ENCODE measurements at regions of chr19 and their contacts with region 1.

Region 1: DNA sequence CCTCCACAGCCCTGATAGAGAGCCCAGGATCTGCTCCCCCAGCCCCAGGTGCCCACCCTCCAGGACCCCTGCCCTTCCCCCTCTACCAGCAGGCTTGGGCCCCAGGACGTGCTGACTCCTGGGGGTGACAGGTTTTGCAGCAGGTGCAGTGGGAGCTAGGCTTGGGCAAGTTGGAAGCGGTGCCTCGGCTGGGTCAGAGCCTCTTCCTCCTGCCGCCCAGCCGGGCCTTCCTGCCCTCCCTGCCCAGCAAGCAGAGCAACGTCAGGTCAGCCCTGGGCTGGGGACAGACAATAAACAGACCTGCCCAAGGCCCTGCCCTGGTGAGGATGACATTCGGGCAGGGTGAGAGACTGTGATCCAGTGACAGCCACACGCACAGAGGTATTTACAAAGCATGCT is 9.2 kb upstream of the NCCRP1 start:
- DNase-seq: no peak

Region 2: DNA sequence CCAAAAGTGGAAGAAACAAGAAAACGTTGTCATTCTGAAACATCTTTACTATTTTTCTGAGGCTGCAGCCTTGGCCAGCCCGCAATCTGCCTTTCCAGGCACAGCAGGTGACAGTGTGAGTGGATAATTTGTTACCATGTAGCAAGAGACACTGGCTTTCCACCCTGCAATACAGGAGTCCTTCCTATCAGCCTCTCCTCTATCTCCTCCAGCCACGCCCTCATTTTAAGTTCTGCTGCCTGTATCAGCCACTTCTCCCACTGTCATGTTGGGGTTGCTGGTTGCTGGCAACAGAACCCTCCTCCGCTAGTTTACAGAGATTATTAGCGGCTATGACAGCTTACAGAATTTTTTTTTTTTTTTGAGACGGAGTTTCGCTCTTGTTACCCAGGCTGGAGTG is 406.5 kb before region 1 on chr19:
- intact Hi-C with region 1: no loop called
- DNase-seq: no peak

Region 3: DNA sequence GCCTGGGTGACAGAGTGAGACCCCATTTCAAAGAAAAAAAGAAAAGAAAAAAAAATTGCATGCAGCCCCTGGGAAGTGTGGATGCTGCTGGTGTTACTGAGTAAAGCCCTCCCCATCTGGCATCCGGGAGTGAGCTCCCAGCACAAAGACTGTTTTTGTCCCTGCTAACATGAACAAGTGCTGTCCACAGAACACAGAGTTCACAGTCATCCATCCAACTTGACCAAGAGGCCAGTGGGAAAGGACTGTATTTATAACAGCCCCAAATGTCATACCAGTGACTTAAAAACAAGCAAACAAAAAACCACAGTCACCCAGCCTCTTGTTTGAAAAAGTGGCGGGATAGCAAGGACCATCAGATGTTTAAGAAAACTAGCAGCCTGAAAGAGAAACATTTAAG is 222.8 kb before region 1 on chr19:
- intact Hi-C with region 1: loop called (anchors 10 kb)
- DNase-seq: peak in 1 of 10 donors; percentile 19

Region 4: DNA sequence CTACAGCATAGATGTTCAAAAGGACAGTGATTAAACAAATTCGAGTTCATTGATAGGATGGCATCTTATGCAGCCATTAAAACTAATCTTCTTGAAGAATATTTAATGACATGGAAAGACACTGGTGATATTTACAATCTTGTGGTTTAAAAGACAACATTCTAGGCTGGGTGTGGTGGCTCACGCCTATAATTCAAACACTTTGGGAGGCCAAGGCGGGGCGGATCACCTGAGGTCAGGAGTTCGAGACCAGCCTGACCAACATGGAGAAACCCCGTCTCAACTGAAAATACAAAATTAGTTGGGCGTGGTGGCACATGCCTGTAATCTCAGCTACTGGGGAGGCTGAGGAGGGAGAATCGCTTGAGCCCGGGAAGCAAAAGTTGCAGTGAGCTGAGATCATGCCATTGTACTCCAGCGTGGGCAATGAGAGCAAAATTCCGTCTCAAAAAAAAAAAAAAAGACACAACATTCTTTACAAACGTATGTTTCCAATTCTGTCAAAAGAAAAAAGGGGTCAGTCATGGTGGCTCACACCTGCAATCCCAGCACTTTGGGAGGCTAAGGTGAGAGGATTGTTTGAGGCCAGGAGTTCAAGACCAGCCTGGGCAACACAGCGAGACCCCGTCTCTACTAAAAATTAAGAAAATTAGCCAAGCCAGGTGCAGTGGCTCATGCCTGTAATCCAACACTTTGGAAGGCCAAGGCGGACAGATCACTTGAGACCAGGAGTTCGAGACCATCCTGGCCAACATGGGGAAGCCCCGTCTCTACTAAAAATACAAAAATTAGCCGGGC is 64.4 kb before region 1 on chr19:
- intact Hi-C with region 1: loop called (anchors 1 kb)
- DNase-seq: no peak

Measured in posterior cingulate gyrus (tissue), 11 donors.